Posterior cingulate gyrus (tissue), 11 donors: ENCODE measurements at regions of chr3 and their contacts with region 1.

Region 1: GRCh38 chr3:149717391-149718056 is 34.8 kb downstream of the COMMD2 start:
- DNase-seq: peak in 3 of 10 donors; percentile 24 to 43 (median 27)

Region 2: DNA sequence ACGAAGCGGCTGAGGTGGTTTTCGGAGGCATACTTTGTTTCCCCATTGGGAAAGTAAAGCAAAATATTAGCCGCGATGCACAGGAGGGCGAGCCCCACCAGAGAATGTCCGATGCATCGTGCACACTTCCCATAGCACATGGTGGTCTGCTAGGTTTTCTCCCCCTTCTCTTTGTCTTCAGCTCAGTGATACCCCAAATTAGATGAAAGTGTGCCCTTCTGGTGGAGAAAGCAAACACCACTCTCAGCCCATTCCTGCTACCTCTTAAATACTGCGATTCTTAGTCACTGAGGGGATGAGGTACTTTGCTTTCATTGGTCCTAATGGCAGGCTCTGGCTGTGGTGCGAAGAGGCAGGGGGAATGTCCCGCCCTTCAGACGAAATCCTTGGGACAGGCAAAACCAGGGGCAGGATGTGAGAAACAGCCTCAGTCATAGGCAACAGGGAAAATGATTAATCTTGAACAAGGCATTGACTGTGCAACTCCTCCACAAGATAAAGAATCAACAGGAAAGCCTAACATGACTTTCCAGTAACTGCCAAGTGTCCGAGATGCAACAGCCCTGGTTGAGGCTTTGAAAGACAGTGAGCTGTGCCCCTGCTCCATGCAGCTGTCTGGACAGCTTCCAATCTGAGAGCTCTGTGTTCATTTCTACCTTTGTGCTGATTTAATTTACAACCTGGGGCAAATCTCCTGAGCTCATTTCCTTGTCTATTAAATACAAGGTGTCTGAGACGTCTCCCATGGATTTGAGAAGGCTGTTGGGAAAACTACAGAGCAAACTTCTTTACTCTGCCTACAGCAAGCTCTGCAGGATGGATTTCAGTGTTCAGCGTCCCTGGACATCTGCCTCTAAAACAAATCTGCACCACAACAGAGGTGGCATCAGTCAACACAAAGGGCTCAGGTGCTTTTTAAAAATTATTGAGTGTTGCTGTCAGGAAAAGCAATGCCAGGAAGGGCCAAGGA is 339.8 kb before region 1 on chr3 and contains the start of gene TM4SF1:
- intact Hi-C with region 1: no loop called
- DNase-seq: no peak

Region 3: DNA sequence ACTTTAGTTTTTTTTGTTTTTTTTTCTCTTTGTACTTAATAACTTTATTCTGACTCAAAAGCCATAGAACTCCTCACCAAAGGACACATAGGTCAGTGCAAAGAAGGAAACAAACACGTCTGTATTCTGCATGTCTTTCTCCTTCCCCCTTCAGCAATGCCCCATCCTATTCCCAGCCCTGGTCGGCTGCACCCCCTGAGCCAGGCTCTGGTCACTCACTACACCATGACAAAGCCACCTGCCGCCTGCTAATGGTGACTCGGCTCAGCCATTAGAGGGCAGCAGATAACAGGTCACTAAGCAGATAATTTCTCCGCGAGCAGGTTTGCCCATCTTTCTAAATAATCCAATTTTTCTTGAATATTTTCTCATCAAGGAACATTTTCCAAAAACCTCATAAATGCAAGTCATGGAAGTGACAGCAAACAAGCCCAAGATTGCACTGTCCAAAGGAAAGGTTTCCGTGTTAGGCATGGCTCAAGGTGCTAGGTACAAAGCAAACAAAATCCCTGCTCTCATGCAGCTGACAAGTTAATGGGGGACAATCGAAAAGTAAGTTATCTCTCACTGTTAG is 205.2 kb before region 1 on chr3:
- intact Hi-C with region 1: loop called (anchors 2 kb)
- DNase-seq: peak in 9 of 10 donors; percentile 42 to 93 (median 65)

Region 4: GRCh38 chr3:149527531-149528339 is 189.8 kb before region 1 on chr3:
- intact Hi-C with region 1: loop called (anchors 1 kb)
- DNase-seq: peak in 1 of 10 donors; percentile 41